ENCODE measurements at regions of chr17 and their contacts with region 1.

Region 1: DNA sequence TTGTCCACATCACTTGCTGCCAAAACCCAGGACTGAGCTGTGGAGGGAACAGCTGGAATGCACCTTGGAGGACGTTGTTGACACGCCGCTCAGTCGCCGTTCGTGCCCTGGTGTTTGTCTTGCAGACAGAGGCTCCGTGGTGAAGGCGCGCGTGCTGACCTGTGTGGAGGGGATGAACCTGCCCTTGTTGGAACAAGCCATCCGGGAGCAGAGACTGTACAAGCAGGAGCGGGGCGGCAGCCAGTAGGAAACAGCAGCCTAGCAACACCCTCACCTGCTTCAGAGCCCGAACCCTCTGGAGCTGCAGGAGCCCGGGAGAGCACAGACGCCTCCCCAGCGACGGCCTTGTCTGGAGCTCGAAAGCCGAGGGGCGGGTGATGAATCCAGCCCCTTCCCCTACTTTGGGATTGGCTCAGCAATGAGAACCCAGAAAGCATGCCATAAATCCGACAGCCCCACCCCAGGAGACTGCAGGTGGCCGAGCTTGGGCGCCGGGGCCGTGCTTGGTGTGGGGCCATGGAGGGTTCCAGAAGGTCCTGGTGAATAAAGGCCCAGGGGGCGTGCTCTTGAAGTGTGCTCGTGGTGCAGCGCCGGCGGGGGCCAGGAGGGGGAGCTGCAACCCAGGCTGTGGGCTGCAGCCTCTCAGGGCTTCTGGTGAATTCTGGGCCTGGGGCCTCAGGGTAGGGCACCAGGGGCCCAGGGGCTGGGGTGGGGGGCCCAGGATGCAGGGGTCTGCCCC is 470 bp upstream of the CDK3 start:
- DNase-seq: peak; percentile 75
- ATAC-seq: peak; percentile 77
- H3K4me3 Mint-ChIP-seq: no peak overlapping the region
- H3K27ac Mint-ChIP-seq: no peak overlapping the region
- H3K4me1 Mint-ChIP-seq: peaks cover 20% of the 10 kb centered on the region
- H3K27me3 Mint-ChIP-seq: no peaks in the 10 kb centered on the region

Region 2: DNA sequence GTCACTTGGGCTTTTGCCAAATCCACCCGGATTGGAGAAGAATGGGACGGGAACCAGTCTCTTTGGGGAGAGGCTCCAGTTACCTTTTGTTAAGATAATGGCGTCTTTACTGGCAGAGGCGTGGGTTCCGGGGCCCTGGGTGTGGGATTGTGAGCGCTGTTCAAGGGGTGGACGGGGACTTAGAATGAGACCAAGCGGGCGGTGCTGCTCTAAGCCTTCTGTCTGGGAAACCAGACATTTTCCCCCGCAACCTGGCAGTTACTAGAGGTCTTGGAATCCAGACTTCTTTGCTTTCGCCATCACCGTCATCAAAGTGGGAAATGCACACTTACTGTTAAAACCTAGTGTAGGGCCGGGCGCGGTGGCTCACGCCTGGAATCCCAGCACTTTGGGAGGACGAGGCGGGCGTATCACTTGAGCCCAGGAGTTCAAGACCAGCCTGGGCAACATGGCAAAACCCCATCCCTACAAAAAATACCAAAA is 20.4 kb before region 1 on chr17:
- CTCF ChIA-PET with region 1: interaction called, 13 read pairs
- POLR2A ChIA-PET with region 1: interaction called, 3 read pairs
- DNase-seq: no peak
- ATAC-seq: peak; percentile 47
- H3K4me3 Mint-ChIP-seq: peak overlapping the region; percentile 99
- H3K27ac Mint-ChIP-seq: peak overlapping the region; percentile 100
- H3K4me1 Mint-ChIP-seq: peaks cover 40% of the 10 kb centered on the region
- H3K27me3 Mint-ChIP-seq: no peaks in the 10 kb centered on the region

Region 3: DNA sequence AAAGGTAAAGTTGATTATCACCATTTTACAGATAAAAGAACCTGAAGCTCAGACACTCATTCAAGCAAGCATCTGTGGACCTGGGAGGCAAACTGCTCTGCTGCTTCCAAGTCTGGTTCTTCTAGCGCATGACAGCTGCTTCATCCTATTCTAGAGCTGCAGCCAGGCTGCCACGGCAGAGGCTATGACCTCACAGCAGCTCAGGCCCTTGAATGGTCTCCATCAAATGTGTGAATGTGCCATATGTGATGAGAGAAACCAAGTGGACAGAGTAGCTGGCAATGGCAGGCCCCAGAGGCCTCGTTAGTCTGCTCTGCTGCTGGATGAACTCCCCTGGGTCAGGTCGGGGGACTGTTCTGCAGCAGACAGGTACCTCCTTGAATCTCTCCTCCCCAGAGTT is 171.5 kb after region 1 on chr17:
- CTCF ChIA-PET with region 1: no interaction called
- POLR2A ChIA-PET with region 1: no interaction called
- DNase-seq: no peak
- ATAC-seq: no peak
- H3K4me3 Mint-ChIP-seq: no peak overlapping the region
- H3K27ac Mint-ChIP-seq: no peak overlapping the region
- H3K4me1 Mint-ChIP-seq: peaks cover 6% of the 10 kb centered on the region
- H3K27me3 Mint-ChIP-seq: no peaks in the 10 kb centered on the region